Mammary epithelial cell (primary cell): ENCODE measurements at regions of chr21 and their contacts with region 1.

Region 1: GRCh38 chr21:38012701-38013100 is 96.4 kb upstream of the KCNJ6 start:
- DNase-seq: no peak
- H3K4me3 ChIP-seq: no peak overlapping the region
- H3K27ac ChIP-seq: no peak overlapping the region
- H3K4me1 ChIP-seq: no peaks in the 10 kb centered on the region
- H3K27me3 ChIP-seq: no peaks in the 10 kb centered on the region
- CTCF ChIP-seq: no peak

Region 2: GRCh38 chr21:37958537-37958936 is 54.2 kb before region 1 on chr21:
- CTCF ChIA-PET with region 1: no interaction called
- dilution Hi-C with region 1: no loop called
- in situ Hi-C with region 1: no loop called
- intact Hi-C with region 1: no loop called
- DNase-seq: no peak
- H3K4me3 ChIP-seq: no peak overlapping the region
- H3K27ac ChIP-seq: no peak overlapping the region
- H3K4me1 ChIP-seq: no peaks in the 10 kb centered on the region
- H3K27me3 ChIP-seq: no peaks in the 10 kb centered on the region
- CTCF ChIP-seq: no peak

Region 3: GRCh38 chr21:38042246-38042645 is 29.5 kb after region 1 on chr21:
- CTCF ChIA-PET with region 1: no interaction called
- dilution Hi-C with region 1: loop called (anchors 5 kb)
- in situ Hi-C with region 1: no loop called
- intact Hi-C with region 1: no loop called
- DNase-seq: peak; percentile 23
- H3K4me3 ChIP-seq: no peak overlapping the region
- H3K27ac ChIP-seq: no peak overlapping the region
- H3K4me1 ChIP-seq: no peaks in the 10 kb centered on the region
- H3K27me3 ChIP-seq: no peaks in the 10 kb centered on the region
- CTCF ChIP-seq: no peak

Region 4: DNA sequence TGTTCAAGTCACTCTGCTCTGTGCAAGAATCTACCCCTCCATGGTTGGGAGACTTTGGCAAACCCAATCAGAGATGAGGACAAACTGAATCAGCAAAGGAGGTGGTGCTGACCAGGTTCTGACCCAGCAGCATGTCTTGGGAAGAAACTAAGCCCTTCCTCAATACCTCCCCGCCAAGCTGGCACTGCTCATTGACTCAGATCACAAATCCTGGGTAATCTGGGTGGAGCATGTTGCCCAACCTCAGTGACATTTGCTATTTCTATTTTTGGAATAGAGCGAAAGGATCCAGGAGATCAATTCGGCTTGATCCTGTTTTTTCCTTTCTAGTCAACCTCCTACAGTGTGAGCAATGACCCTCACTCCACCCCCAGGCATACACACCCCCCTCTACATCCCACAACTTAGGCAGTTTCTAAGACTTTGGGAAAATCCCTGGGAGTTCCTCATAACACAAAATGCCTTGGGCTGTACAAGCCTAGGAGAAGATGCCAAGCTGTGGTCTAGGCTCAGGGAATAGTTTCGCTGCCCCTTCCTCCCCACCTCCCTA is 70.3 kb after region 1 on chr21:
- CTCF ChIA-PET with region 1: no interaction called
- dilution Hi-C with region 1: no loop called
- in situ Hi-C with region 1: no loop called
- intact Hi-C with region 1: no loop called
- DNase-seq: peak; percentile 48
- H3K4me3 ChIP-seq: no peak overlapping the region
- H3K27ac ChIP-seq: no peak overlapping the region
- H3K4me1 ChIP-seq: no peaks in the 10 kb centered on the region
- H3K27me3 ChIP-seq: no peaks in the 10 kb centered on the region
- CTCF ChIP-seq: no peak

Region 5: GRCh38 chr21:38853421-38853919 is 840.8 kb after region 1 on chr21:
- CTCF ChIA-PET with region 1: no interaction called
- dilution Hi-C with region 1: no loop called
- in situ Hi-C with region 1: no loop called
- intact Hi-C with region 1: no loop called
- DNase-seq: peak; percentile 98
- H3K4me3 ChIP-seq: no peak overlapping the region
- H3K27ac ChIP-seq: peak overlapping the region; percentile 45
- H3K4me1 ChIP-seq: peaks cover 28% of the 10 kb centered on the region
- H3K27me3 ChIP-seq: no peaks in the 10 kb centered on the region
- CTCF ChIP-seq: no peak